ENCODE measurements at regions of chr22 and their contacts with region 1.

Region 1: DNA sequence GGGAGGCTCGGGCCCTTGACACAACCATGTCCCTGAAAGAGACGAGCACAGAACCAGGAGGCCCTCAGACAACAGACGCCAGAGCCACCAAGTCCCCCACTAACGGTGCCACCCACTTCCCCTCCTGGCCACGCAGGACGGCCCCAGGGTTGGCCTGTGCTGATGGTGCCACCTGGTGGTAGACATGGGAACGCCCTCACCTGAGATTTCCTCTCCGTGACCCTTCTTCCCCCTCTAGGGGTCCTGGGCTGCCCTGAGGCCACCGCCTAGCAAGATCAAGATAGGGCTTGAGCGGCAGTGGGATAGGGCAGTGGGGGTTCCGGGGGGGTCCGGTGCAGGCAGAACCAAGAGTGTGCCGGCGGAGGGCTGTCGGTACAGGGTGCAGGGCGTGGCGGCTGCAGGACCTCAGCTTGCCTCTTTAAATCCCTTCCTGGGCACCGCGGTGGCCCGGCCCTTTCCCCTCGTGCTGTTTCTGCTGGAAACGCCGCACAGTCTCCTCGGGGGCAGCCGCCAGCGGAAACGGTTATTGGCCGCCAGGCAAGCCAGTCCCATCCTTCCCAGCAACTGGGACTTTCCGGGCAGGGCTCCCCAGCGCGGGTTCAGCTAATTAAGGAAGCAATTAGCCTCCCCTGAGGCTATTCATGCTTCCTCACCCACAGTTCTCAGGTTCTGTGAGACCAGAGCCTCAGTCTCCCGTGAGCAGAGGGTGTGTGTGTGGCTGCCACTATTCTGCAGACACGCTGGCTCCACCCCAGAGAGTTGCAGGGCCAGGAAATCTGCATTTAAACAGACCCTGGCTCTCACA is 5.5 kb upstream of the NFAM1 start:
- DNase-seq: peak; percentile 52
- H3K4me3 ChIP-seq: peak overlapping the region; percentile 48 to 69 (median 54)
- H3K27ac ChIP-seq: no peak overlapping the region
- H3K4me1 ChIP-seq: peaks cover 35% of the 10 kb centered on the region
- H3K27me3 ChIP-seq: no peaks in the 10 kb centered on the region
- CTCF ChIP-seq: peak; percentile 92 to 99

Region 2: DNA sequence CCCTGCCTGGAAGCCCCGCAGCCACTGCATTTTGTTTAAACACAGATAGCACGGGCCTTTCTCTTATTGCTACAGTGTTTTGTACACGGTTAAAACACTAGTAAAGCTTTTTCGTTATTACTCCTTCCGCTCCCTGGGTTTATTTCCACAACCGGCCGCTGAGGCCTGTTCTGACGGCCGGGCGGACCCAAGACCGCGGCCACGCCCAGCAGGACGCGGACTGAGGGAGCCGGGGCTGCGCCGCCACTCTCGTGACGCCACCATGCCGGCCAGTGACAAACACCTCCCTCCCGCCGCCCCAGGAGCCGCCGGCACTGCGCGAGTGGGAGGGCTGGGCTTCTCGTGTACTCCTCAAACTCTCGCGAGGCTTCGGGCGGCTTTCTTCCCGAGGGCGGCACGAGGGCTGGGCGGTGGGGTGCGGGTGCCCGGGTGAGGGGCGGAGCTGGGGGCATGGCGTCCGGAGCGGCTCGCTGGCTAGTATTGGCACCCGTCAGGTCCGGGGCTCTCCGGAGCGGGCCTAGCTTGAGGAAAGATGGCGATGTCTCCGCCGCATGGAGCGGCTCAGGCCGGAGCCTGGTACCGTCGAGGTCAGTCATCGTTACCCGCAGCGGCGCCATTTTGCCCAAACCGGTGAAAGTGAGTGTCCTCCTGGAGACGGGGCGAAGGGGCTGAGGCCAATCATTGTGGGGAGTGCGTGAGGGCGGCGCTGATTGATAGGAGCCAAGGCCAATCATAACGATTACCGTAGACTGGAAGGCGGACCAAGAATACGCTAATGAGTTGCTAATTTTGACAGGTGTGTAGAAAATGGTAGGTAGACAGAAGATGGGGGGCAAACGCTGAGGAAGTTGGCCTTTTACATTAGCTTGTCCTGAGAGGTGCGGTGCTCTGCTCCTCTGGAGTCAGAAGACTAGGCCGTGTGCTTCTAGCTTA is 358.1 kb before region 1 on chr22 and contains the start of gene SMDT1:
- CTCF ChIA-PET with region 1: no interaction called
- dilution Hi-C with region 1: no loop called
- in situ Hi-C with region 1: loop called in 1 of 2 experiments (anchors 10 kb)
- intact Hi-C with region 1: no loop called
- DNase-seq: peak; percentile 97
- H3K4me3 ChIP-seq: peak within 1 kb of the TSS; percentile 68 to 92 (median 76)
- H3K27ac ChIP-seq: peak within 1 kb of the TSS; percentile 85
- H3K4me1 ChIP-seq: peaks cover 16% of the 10 kb centered on the region
- H3K27me3 ChIP-seq: no peaks in the 10 kb centered on the region
- CTCF ChIP-seq: no peak
- total RNA-seq, gene SMDT1: 2.7 to 47.1 TPM

Region 3: GRCh38 chr22:42169055-42169469 is 268.6 kb before region 1 on chr22:
- CTCF ChIA-PET with region 1: no interaction called
- dilution Hi-C with region 1: no loop called
- in situ Hi-C with region 1: loop called in 1 of 2 experiments (anchors 5 kb)
- intact Hi-C with region 1: loop called (anchors 1 kb)
- DNase-seq: peak; percentile 17
- H3K4me3 ChIP-seq: no peak overlapping the region
- H3K27ac ChIP-seq: no peak overlapping the region
- H3K4me1 ChIP-seq: peaks cover 20% of the 10 kb centered on the region
- H3K27me3 ChIP-seq: no peaks in the 10 kb centered on the region
- CTCF ChIP-seq: peak; percentile 70 to 77

Region 4: GRCh38 chr22:42258126-42258525 is 179.6 kb before region 1 on chr22:
- CTCF ChIA-PET with region 1: interaction called, 15 read pairs
- dilution Hi-C with region 1: no loop called
- in situ Hi-C with region 1: no loop called
- intact Hi-C with region 1: no loop called
- DNase-seq: no peak
- H3K4me3 ChIP-seq: no peak overlapping the region
- H3K27ac ChIP-seq: no peak overlapping the region
- H3K4me1 ChIP-seq: peaks cover 4% of the 10 kb centered on the region
- H3K27me3 ChIP-seq: no peaks in the 10 kb centered on the region
- CTCF ChIP-seq: no peak

Region 5: DNA sequence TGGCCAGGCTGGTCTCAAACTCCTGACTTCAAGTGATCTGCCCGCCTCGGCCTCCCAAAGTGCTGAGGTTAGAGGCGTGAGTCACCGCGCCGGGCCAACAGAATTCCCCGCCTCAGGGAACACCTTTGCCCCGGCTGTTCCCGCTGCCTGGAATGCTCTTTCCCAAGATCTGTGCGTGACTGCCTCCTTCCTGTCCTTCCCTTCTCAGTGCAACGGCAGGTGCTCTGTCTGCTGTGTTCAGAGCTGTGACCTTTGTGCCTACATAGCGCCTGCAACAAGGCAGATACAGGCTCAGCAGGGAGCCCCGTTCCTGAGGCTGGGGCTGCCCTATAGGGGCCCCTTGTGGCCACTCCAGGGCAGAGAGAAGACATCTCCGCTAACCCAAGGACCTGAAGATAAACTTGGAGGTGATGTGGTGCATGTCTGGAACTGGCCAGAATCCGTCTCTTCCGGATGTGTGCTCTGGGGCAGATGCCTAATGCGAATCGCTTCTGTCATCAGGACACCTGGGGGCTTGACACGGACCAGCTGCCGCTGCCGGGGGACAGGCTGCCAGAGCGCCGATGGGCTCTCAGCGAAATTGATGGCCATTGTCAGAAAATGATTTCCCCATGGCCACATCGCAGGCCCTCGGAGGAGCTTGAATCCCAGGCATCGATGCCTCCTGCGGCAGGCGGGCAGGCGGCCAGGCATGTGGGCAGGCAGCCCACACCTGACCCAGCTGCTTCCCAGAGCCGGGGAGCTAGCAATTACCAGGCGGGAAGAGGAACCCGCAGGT is 123.7 kb before region 1 on chr22:
- CTCF ChIA-PET with region 1: no interaction called
- dilution Hi-C with region 1: no loop called
- in situ Hi-C with region 1: no loop called
- intact Hi-C with region 1: loop called (anchors 2 kb)
- DNase-seq: peak; percentile 84
- H3K4me3 ChIP-seq: no peak overlapping the region
- H3K27ac ChIP-seq: peak overlapping the region; percentile 6
- H3K4me1 ChIP-seq: peaks cover 54% of the 10 kb centered on the region
- H3K27me3 ChIP-seq: no peaks in the 10 kb centered on the region
- CTCF ChIP-seq: peak; percentile 45 to 68

Region 6: GRCh38 chr22:42369245-42370041 is 68.2 kb before region 1 on chr22:
- CTCF ChIA-PET with region 1: no interaction called
- dilution Hi-C with region 1: no loop called
- in situ Hi-C with region 1: no loop called
- intact Hi-C with region 1: loop called (anchors 1 kb)
- DNase-seq: peak; percentile 88
- H3K4me3 ChIP-seq: peak overlapping the region; percentile 53 to 87 (median 65)
- H3K27ac ChIP-seq: no peak overlapping the region
- H3K4me1 ChIP-seq: peaks cover 21% of the 10 kb centered on the region
- H3K27me3 ChIP-seq: peaks cover 3% of the 10 kb centered on the region
- CTCF ChIP-seq: no peak

Region 7: GRCh38 chr22:42388130-42388797 is 49.4 kb before region 1 on chr22:
- CTCF ChIA-PET with region 1: no interaction called
- dilution Hi-C with region 1: no loop called
- in situ Hi-C with region 1: no loop called
- intact Hi-C with region 1: no loop called
- DNase-seq: peak; percentile 21
- H3K4me3 ChIP-seq: no peak overlapping the region
- H3K27ac ChIP-seq: no peak overlapping the region
- H3K4me1 ChIP-seq: peaks cover 5% of the 10 kb centered on the region
- H3K27me3 ChIP-seq: no peaks in the 10 kb centered on the region
- CTCF ChIP-seq: no peak

Region 8: DNA sequence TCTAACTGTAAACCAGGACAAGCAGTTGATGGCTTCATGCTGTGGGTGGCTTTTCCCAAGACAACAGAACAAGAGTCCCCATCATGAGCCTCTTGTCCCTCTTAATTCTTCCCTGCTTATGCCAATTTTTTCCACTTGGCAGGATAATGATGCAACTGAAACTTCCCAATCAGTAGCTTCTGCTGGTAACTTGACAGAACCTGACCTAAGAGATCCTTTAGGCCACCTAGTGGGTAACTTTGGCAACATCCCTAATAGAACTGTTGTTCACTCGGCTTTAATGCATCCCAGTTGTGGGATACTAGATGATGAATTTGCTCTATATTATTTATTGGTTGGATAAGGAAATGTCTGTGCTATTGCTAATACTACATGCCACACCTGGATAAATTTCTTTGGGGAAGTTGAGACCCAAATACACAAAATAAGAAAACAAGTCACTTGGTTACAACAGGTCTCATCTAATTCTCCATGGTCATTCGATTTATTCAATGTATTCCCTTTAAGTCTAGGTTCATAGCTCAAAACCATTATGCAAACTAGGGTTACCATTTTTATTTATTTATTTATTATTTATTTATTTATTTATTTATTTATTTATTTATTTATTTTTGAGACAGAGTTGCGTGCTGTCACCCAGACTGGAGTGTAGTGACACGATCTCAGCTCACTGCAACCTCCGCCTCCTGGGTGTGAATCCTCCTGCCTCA is 35.9 kb after region 1 on chr22:
- CTCF ChIA-PET with region 1: no interaction called
- dilution Hi-C with region 1: no loop called
- in situ Hi-C with region 1: no loop called
- intact Hi-C with region 1: no loop called
- DNase-seq: peak; percentile 53
- H3K4me3 ChIP-seq: no peak overlapping the region
- H3K27ac ChIP-seq: no peak overlapping the region
- H3K4me1 ChIP-seq: no peaks in the 10 kb centered on the region
- H3K27me3 ChIP-seq: no peaks in the 10 kb centered on the region
- CTCF ChIP-seq: peak; percentile 71 to 83

Region 9: GRCh38 chr22:42805016-42805997 is 367.6 kb after region 1 on chr22:
- CTCF ChIA-PET with region 1: no interaction called
- dilution Hi-C with region 1: no loop called
- in situ Hi-C with region 1: no loop called
- intact Hi-C with region 1: no loop called
- DNase-seq: peak; percentile 71
- H3K4me3 ChIP-seq: no peak overlapping the region
- H3K27ac ChIP-seq: peak overlapping the region; percentile 33
- H3K4me1 ChIP-seq: peaks cover 17% of the 10 kb centered on the region
- H3K27me3 ChIP-seq: no peaks in the 10 kb centered on the region
- CTCF ChIP-seq: no peak